Activated CD4-positive, alpha-beta T cell treated with anti-CD3 and anti-CD28 coated beads, Interleukin-2, amount 10 ng/mL, durations not matched to agents 24 days and 14 days (primary cell): ENCODE measurements at regions of chr2 and their contacts with region 1.

Region 1: DNA sequence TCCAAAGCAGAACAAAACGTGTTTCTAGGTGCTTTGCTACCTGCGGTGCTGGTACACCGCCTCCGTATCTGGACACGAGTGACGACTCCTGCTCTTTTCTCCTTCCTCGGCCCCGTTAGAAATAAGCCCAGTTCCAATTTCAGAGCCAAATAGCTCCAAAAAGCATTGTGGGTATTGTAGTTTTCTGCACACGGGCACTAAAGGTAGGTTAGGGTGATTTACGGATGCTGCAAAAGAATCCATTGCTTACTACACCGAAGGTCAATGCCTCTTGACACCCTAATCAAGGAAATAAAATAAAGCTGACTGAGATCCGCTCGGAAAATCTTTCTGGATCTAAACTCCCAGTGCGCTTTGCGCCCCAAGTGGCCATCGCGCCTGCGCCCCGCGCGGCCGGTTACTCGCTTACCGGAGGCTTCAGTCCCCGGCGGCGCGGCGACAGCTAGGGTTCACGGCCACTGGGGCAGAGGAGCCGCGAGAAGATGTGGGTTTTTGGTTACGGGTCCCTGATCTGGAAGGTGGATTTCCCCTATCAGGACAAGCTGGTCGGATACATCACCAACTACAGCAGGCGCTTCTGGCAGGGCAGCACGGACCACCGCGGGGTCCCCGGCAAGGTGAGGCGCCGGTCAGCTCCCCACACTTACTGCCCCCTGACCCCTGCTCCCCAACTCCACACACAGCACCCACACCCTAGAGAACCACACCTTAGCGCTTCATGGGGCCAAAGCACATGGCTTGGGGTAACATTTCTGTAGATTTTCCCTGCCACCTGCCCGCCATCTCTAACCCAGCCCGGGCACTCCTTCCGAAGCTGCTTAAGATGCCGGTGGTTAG is at the start of gene CHAC2:
- DNase-seq: peak; percentile 96
- H3K4me3 Mint-ChIP-seq: peak within 1 kb of the TSS; percentile 92
- H3K27ac Mint-ChIP-seq: peak within 1 kb of the TSS; percentile 98
- H3K4me1 Mint-ChIP-seq: peaks cover 24% of the 10 kb centered on the region
- H3K27me3 Mint-ChIP-seq: no peaks in the 10 kb centered on the region
- total RNA-seq, gene CHAC2: 24.8 and 27.4 TPM in 2 replicates

Region 2: GRCh38 chr2:53786705-53787612 is 19.3 kb after region 1 on chr2 and contains the starts of genes ASB3 and ERLEC1:
- intact Hi-C with region 1: loop called (anchors 1 kb)
- DNase-seq: peak; percentile 97
- H3K4me3 Mint-ChIP-seq: peak within 1 kb of the TSS; percentile 97
- H3K27ac Mint-ChIP-seq: peak within 1 kb of the TSS; percentile 96
- H3K4me1 Mint-ChIP-seq: peaks cover 30% of the 10 kb centered on the region
- H3K27me3 Mint-ChIP-seq: no peaks in the 10 kb centered on the region
- total RNA-seq, gene ASB3: 19.6 and 24.0 TPM in 2 replicates
- total RNA-seq, gene ERLEC1: 24.1 and 24.9 TPM in 2 replicates